Heart left ventricle (tissue), 16 donors: ENCODE measurements at regions of chr11 and their contacts with region 1.

Region 1: GRCh38 chr11:110447897-110448745 is 18.4 kb downstream of the FDX1 start:
- DNase-seq: no peak
- ATAC-seq: no peak
- H3K4me3 ChIP-seq: no peak overlapping the region
- H3K27ac ChIP-seq: no peak overlapping the region
- H3K4me1 ChIP-seq: peaks cover 0 to 13% (median 0%) of the 10 kb centered on the region in 12 donors
- H3K27me3 ChIP-seq: no peaks in the 10 kb centered on the region
- CTCF ChIP-seq: peak; percentile 12 to 55 (median 28)
- POLR2A ChIP-seq: no peak

Region 2: GRCh38 chr11:111438846-111439520 is 990.9 kb after region 1 on chr11:
- intact Hi-C with region 1: loop called in 1 of 10 experiments (anchors 5 kb)
- DNase-seq: peak in 1 of 5 donors; percentile 25
- ATAC-seq: no peak
- H3K4me3 ChIP-seq: no peak overlapping the region
- H3K27ac ChIP-seq: peak overlapping the region in 1 of 12 donors; percentile 4
- H3K4me1 ChIP-seq: peaks cover 0 to 6% (median 0%) of the 10 kb centered on the region in 12 donors
- H3K27me3 ChIP-seq: no peaks in the 10 kb centered on the region
- CTCF ChIP-seq: no peak
- POLR2A ChIP-seq: no peak